ENCODE measurements at regions of chr14 and their contacts with region 1.

Region 1: DNA sequence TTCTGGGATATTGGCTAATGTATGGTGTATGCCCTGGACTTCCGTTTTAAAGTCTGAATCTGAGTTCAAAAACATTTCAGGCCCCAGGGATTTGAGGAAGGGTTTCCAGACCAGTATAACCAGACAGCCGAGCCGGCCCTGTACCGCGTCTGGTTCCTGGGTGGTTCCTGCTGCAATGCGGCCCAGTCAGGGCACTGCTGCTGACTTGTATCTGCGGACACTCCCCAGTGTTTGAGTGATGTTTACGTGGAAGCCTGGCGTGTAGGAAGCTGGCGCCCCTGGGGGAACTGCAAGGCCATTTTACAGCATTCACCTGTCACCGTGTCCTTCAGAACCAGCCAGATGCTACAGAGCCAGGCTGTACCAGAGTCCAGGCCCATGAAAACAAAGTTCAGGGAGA is 16.6 kb downstream of the EML1 start:
- DNase-seq: peak in 1 of 7 donors; percentile 52
- H3K4me3 ChIP-seq: no peak overlapping the region
- H3K27ac ChIP-seq: peak overlapping the region in 2 of 5 donors; percentile 23 to 33
- H3K4me1 ChIP-seq: peaks cover 0 to 16% of the 10 kb centered on the region in 2 donors
- H3K27me3 ChIP-seq: no peaks in the 10 kb centered on the region
- CTCF ChIP-seq: no peak
- POLR2A ChIP-seq: no peak

Region 2: DNA sequence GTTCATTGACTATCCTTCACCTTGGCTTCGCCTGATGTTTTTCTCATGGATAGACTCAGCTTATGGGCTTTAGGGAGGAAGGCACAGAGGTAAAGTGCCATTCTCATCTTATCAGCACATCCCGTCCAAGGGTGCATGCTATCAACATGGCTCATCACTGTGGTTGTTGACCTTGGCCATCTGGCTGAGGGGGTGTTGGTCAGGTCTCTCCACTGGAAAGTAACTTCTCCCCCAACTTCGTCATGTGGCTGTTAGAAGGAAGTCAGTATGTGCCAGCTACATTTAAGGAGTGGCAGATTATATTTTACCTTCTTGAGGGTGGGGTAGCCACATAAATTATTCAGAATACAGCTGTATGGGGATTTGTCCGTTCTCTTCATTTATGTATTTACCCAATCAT is 52.3 kb after region 1 on chr14:
- intact Hi-C with region 1: loop called in 1 of 2 experiments (anchors 10 kb)
- DNase-seq: no peak
- H3K4me3 ChIP-seq: no peak overlapping the region
- H3K27ac ChIP-seq: no peak overlapping the region
- H3K4me1 ChIP-seq: no peaks in the 10 kb centered on the region
- H3K27me3 ChIP-seq: no peaks in the 10 kb centered on the region
- CTCF ChIP-seq: no peak
- POLR2A ChIP-seq: no peak

Region 3: GRCh38 chr14:100108042-100108825 is 298.4 kb after region 1 on chr14:
- intact Hi-C with region 1: no loop called
- DNase-seq: peak; percentile 69 to 91 (median 81)
- H3K4me3 ChIP-seq: no peak overlapping the region
- H3K27ac ChIP-seq: peak overlapping the region in 1 of 5 donors; percentile 1
- H3K4me1 ChIP-seq: peaks cover 13 to 30% of the 10 kb centered on the region in 2 donors
- H3K27me3 ChIP-seq: no peaks in the 10 kb centered on the region
- CTCF ChIP-seq: peak; percentile 81 to 92 (median 88)
- POLR2A ChIP-seq: no peak